ENCODE measurements at regions of chr10 and their contacts with region 1.

Region 1: GRCh38 chr10:103918053-103918846 is at the start of gene STN1:
- DNase-seq: peak; percentile 93 to 98 (median 97)
- H3K4me3 ChIP-seq: peak within 1 kb of the TSS; percentile 60 to 98 (median 81)
- H3K27ac ChIP-seq: peak within 1 kb of the TSS; percentile 79 to 98 (median 94)
- H3K27me3 ChIP-seq: no peaks in the 10 kb centered on the region
- CTCF ChIP-seq: peak in 32 of 56 donors; percentile 2 to 57 (median 28)
- total RNA-seq, gene STN1: 7.9 to 24.9 (median 15.5) TPM

Region 2: DNA sequence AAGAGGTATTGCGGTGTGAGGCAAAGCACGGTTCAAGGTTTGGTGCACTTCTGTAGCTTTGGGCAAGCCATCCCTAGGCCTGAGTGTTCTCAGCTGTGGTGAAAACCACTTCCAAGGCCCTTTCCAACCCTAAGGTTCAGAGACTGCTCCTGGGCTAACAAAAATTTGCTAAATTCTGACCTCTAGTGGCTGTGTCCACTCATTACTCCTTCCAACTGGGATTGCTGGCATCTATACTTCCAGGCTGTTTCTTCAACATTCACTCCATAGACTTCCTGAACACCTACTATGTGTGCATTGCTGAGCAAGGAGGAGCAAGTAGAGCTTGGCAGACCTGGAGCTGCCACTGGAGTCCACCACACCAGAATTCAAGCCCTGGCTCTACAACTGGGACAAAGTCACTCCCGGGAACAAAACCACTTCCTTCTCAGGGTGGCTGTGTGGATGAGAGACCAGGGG is 33.5 kb before region 1 on chr10:
- intact Hi-C with region 1: no loop called
- DNase-seq: peak in 3 of 10 donors; percentile 5 to 50 (median 38)
- H3K4me3 ChIP-seq: no peak overlapping the region
- H3K27ac ChIP-seq: peak overlapping the region in 9 of 59 donors; percentile 7 to 48 (median 25)
- H3K27me3 ChIP-seq: no peaks in the 10 kb centered on the region
- CTCF ChIP-seq: peak; percentile 40 to 95 (median 83)

Region 3: DNA sequence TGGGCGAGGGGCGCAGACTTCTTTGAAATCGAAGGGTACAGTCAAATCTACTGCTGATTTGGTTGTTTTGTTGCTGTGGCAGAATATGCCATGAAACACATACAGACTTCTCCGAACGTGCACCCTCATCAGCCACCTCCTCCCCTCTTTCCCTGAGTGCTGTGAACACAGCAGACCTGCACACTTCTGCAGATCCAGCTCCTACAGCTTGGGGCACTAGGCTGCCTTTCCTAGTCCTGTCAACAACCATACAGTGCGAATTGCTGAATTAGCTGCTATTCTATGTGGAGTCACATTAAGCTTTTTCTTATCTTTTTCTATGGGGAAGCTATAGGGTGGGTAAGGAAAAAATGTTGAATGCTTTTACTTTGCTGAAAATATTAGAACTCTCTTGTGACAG is 109.9 kb after region 1 on chr10:
- intact Hi-C with region 1: loop called in 1 of 2 experiments (anchors 5 kb)
- DNase-seq: peak in 8 of 10 donors; percentile 34 to 80 (median 70)
- H3K4me3 ChIP-seq: peak overlapping the region in 2 of 59 donors; percentile 4 to 17
- H3K27ac ChIP-seq: peak overlapping the region in 57 of 59 donors; percentile 16 to 93 (median 79)
- H3K27me3 ChIP-seq: no peaks in the 10 kb centered on the region
- CTCF ChIP-seq: peak in 54 of 56 donors; percentile 30 to 74 (median 60)

Measured in dorsolateral prefrontal cortex (tissue), 120 donors.